ENCODE measurements at regions of chr13 and their contacts with region 1.

Region 1: DNA sequence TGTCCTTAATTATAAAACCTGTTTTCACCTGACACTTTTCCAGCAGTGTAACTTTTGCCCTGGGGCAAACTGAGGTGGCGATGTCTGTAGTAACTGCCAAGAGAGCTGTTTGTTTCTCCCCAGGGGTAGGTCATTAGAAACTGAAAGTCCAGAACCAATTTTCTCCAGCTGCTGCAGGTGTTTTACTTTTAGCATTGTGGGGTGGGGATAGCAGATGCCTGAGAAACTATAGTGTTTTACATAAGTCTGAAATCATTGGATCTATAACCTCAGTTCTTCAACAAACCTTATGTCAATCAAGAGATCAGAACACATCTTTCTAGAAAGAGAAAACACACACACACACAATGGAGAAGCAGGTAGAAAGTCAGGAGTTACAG is 92.7 kb downstream of the LHFPL6 start:
- DNase-seq: no peak
- ATAC-seq: no peak

Region 2: GRCh38 chr13:39448834-39449233 is 61.5 kb before region 1 on chr13:
- intact Hi-C with region 1: loop called in 1 of 2 experiments (anchors 10 kb)
- DNase-seq: no peak
- ATAC-seq: peak in 1 of 2 donors; percentile 10

Region 3: GRCh38 chr13:39765801-39766463 is 255.6 kb after region 1 on chr13:
- intact Hi-C with region 1: no loop called
- DNase-seq: peak; percentile 40
- ATAC-seq: peak; percentile 83 to 94

Region 4: DNA sequence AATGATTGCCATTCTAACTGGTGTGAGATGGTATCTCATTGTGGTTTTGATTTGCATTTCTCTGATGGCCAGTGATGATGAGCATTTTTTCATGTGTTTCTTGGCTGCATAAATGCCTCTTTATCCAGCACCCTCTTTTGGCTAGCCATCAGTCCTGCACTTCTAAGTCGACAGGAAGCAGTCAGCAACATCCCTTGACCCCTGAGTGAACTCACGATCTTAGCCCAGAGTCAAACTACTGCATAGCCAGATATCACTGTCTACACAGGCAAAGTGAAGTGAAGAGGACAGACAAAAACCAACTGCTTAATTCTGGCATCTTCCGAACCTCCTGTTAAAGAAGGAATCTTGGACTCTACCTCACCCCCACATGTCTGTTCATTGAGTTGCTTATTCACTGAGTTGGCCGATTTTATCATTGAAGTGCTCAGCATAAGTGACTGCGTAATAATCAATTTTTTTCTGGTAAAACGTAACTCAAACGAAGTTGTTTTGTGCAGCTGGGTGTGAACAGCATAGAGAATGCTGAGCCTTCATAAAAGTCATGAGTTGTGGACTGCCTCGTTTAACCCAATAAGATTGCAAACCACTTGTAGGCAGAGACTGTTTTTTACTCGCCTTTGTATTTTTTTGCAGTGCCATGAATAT is 449.3 kb after region 1 on chr13:
- intact Hi-C with region 1: no loop called
- DNase-seq: no peak
- ATAC-seq: peak; percentile 15 to 29

Measured in left cardiac atrium (tissue), 4 donors.